Lower leg skin (tissue), 4 donors: ENCODE measurements at regions of chr5 and their contacts with region 1.

Region 1: GRCh38 chr5:36507332-36507952 is 99.0 kb upstream of the SLC1A3 start:
- DNase-seq: peak; percentile 74 to 96
- H3K4me3 ChIP-seq: no peak overlapping the region
- CTCF ChIP-seq: peak in 1 of 3 donors; percentile 38
- POLR2A ChIP-seq: no peak

Region 2: DNA sequence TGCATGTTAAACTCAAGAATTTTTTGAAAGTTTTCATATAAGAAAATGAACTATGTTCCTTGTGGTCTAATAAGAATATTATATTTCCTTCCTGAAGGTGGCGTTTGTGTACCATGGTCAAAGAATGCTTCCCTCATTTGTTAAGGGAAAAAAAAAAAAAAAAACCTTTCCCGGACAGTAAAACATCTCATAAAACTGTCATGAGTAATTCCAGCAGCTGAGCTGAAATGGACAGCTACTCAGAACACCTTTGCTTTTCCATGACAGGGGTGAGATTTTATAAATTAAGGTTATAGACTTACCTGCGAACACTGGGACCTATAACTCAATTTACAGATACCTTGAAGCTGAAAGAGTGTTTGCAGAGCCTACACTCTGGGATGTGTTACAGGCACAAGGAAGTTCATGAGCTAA is 92.6 kb before region 1 on chr5:
- intact Hi-C with region 1: loop called (anchors 10 kb)
- DNase-seq: no peak
- H3K4me3 ChIP-seq: no peak overlapping the region
- CTCF ChIP-seq: no peak
- POLR2A ChIP-seq: no peak